MCF 10A (cell line): ENCODE measurements at regions of chr22 and their contacts with region 1.

Region 1: DNA sequence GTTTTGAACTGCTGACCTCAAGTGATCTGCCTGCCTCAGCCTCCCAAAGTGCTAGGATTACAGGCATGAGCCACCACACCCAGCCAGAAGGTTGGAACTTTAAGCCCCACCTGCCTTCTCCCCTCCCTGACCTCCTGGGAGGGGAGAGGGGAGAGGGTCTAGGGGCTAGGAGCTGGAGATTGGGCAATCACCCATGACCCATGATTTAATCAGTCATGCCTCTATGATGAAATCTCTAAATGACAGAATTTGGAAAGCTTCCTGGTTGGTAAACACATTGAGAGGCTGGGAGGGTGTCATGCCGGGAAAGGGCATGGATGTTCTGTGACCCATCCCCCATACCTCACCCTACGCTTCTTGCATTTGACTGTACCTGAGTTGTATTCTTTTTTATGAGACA is 17.1 kb upstream of the TFIP11 start:
- DNase-seq: peak; percentile 80
- H3K4me3 Mint-ChIP-seq: no peak overlapping the region
- H3K27ac Mint-ChIP-seq: peak overlapping the region; percentile 79
- H3K4me1 Mint-ChIP-seq: peaks cover 15% of the 10 kb centered on the region
- H3K27me3 Mint-ChIP-seq: no peaks in the 10 kb centered on the region
- CTCF ChIP-seq: no peak

Region 2: DNA sequence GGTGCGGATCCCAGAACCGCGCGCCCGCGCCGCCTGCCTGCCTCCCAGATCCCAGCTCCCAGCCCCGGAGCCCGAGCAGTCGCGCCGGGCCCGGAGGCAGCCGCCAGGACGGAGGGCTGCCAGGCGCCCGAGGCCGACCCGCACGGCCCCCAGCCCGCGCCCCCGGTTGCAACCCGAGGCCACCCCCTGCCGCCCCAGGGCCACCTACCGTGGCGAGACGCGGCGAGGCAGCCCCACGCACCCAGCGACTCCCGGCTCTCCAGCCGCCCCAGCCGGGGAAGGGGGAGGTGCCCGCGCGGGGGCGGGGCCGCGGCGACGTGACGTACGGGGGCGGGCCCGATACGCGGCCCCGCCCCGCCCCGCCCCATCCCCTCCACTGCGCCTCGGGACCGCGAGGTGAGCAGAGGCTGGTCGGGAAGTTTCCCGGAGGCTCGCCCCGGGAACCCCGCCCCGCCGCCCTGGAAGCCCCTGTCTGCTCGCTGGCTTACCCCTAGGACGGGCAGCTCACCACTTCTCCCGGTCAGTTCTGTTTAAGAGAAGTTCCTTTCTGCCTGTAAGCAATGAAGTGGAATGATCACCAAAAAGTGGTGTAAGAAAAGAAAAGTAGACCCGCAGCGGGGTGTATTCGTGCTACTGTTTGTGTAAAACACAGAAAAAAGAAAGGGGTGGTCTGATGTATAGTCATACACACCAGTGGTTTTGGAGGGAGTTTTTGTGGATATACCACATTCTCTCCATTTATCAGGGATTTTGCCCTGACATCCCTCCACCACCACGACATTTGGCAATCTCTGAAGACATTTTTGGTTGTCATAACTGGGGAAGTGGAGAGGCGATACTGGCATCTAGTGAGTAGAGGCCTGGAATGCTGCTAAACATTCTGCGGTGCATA is 60.7 kb after region 1 on chr22 and contains the start of gene TPST2:
- CTCF ChIA-PET with region 1: no interaction called
- POLR2A ChIA-PET with region 1: interaction called, 3 read pairs
- intact Hi-C with region 1: loop called (anchors 2 kb)
- DNase-seq: peak; percentile 73
- H3K4me3 Mint-ChIP-seq: peak within 1 kb of the TSS; percentile 79
- H3K27ac Mint-ChIP-seq: peak within 1 kb of the TSS; percentile 86
- H3K4me1 Mint-ChIP-seq: peaks cover 11% of the 10 kb centered on the region
- H3K27me3 Mint-ChIP-seq: no peaks in the 10 kb centered on the region
- CTCF ChIP-seq: no peak
- total RNA-seq, gene TPST2: 6.1 and 7.0 TPM in 2 replicates

Region 3: DNA sequence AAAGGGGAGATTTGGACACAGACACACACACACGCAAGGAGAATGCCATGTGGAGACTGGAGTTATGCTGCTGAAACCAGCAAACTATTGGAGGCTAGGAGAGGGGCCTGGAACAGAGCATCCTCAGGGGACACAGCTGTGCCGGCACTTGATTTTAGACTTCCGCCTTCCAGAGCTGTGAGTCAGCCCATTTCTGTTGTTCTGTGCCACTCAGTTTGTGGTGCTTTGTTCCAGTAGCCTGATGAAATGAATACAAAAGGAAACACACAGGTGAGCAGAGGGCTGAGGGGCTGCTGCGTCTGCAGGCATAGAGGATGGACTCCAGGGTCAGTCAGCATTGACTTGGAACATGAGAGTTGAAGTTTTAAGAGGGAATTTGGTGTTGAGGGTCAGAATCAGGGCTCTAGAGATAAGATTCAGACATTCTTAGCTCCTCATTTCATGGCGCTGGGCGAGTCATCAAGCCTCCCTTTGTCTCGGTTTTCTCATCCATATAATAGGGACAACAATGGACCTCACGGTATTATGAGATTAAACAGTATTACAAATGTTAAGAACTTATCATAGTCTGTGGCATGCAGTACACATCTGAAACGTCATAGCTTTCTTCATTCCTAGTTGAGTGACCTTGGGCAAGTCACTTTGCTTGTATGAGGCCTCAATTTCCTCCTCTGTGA is 319.0 kb after region 1 on chr22:
- CTCF ChIA-PET with region 1: no interaction called
- POLR2A ChIA-PET with region 1: no interaction called
- intact Hi-C with region 1: no loop called
- DNase-seq: peak; percentile 6
- H3K4me3 Mint-ChIP-seq: no peak overlapping the region
- H3K27ac Mint-ChIP-seq: no peak overlapping the region
- H3K4me1 Mint-ChIP-seq: peaks cover 6% of the 10 kb centered on the region
- H3K27me3 Mint-ChIP-seq: peaks cover 48% of the 10 kb centered on the region
- CTCF ChIP-seq: no peak